Activated CD8-positive, alpha-beta T cell treated with anti-CD3 and anti-CD28 coated beads for 36 hours (primary cell): ENCODE measurements at regions of chr3 and their contacts with region 1.

Region 1: DNA sequence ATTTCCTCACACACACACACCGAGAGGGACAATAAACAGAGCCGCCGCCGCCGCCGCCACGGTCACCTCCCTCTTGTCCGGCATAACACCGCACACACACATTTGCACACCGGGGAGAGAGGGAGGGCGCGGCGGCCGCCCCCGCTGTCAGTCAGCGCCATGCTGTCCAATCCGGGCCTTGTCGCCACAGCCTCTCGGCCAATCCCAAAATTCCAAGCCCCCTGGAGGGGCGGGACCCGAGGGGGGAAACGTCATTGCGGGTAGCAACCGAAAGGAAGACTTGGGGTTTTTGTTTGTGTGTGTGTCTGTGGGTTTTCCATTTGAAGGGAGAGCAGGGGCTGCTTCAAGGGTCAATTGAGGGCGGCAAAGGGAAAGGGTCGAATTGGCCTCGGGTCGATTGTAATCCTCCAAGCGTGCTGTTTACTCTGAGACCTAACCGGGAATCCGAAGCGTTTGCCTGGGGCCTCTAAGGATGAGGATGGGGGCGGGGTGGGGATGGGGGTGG is at the start of gene TOP2B:
- DNase-seq: peak; percentile 96
- ATAC-seq: peak; percentile 86
- H3K4me3 Mint-ChIP-seq: peak within 1 kb of the TSS; percentile 96
- H3K27ac Mint-ChIP-seq: peak within 1 kb of the TSS; percentile 99
- H3K4me1 Mint-ChIP-seq: peaks cover 44% of the 10 kb centered on the region
- H3K27me3 Mint-ChIP-seq: no peaks in the 10 kb centered on the region
- CTCF ChIP-seq: no peak
- total RNA-seq, gene TOP2B: 165 to 171 TPM

Region 2: GRCh38 chr3:25782938-25783660 is 118.2 kb after region 1 on chr3 and contains the start of gene NGLY1:
- CTCF ChIA-PET with region 1: interaction called, 3 read pairs
- POLR2A ChIA-PET with region 1: interaction called, 9 read pairs
- intact Hi-C with region 1: loop called (anchors 5 kb)
- DNase-seq: peak; percentile 87
- ATAC-seq: peak; percentile 91
- H3K4me3 Mint-ChIP-seq: peak within 1 kb of the TSS; percentile 91
- H3K27ac Mint-ChIP-seq: peak within 1 kb of the TSS; percentile 88
- H3K4me1 Mint-ChIP-seq: peaks cover 56% of the 10 kb centered on the region
- H3K27me3 Mint-ChIP-seq: no peaks in the 10 kb centered on the region
- CTCF ChIP-seq: no peak
- total RNA-seq, gene NGLY1: 142 to 146 TPM

Region 3: DNA sequence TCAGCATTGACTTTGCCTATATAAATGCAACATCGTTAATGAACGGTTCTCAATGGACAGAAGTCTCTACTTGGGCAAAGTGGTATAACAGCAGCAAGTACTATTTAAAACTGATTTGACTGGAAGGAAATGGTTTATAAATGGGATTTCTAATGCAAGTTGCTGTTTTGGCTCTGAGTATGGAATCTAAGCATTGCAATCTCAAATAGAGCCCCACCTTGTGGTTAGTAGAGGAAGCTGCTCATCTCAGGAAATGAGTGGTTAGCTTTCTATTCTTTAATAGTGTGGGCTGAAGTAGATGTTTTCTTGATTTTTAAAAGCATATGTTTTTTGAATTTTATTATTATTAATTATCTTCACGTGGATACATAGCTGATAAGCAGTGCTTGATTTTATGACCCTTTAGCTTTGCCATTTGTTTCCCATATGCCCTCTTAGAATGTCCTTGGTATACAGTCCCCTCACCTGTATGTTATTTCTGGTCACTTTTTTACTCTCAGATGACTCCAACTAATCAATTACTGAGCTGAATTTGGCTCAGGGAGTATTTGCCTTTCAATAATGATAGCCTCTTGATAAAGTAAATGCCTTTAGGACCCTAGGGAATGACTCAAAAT is 192.1 kb after region 1 on chr3:
- CTCF ChIA-PET with region 1: interaction called, 3 read pairs
- POLR2A ChIA-PET with region 1: no interaction called
- intact Hi-C with region 1: loop called (anchors 5 kb)
- DNase-seq: peak; percentile 9
- ATAC-seq: peak; percentile 92
- H3K4me3 Mint-ChIP-seq: no peak overlapping the region
- H3K27ac Mint-ChIP-seq: no peak overlapping the region
- H3K4me1 Mint-ChIP-seq: peaks cover 12% of the 10 kb centered on the region
- H3K27me3 Mint-ChIP-seq: peaks cover 4% of the 10 kb centered on the region
- CTCF ChIP-seq: peak; percentile 68